Vagina (tissue), 2 donors: ENCODE measurements at regions of chr20 and their contacts with region 1.

Region 1: DNA sequence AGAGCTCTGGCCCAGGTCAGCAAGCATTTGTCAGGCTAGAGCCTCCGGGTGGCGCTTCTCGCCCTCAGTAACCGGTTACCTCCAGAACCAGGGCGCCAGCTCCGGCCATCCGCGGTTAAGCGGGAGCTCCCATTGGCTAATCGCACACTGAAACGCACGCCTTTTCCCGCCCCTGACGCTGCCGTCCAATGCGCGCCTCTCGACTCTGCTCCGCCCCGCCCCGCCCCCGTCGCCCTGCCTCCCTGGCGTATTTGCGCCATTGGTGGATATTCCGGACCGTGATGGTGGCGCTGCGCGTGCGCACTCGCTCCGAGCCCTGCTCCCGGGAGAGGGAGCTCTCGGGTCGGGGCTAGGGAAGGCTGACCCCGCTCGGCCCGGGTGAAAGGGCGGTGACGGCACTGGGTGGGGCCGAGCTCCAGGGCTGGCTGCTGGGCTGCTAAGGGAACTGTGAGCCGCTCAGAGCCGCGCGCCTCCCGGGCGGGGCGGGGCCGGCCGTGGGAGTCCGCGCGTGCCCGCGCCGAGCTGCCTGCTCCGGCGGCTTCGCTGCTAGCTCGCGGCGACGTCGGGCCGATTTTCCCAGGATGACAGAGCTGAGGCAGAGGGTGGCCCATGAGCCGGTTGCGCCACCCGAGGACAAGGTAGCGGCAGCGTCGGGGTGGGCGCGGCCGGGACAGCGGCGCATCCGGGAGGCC is at the start of gene CDS2:
- DNase-seq: peak; percentile 99 to 100
- H3K4me3 ChIP-seq: peak within 1 kb of the TSS; percentile 95 to 96
- H3K27ac ChIP-seq: peak within 1 kb of the TSS; percentile 98
- H3K4me1 ChIP-seq: peaks cover 36% of the 10 kb centered on the region
- H3K27me3 ChIP-seq: no peaks in the 10 kb centered on the region
- CTCF ChIP-seq: peak; percentile 23 to 69 (median 26)
- POLR2A ChIP-seq: peak in 1 of 2 donors; percentile 79
- total RNA-seq, gene CDS2: 24.8 TPM

Region 2: DNA sequence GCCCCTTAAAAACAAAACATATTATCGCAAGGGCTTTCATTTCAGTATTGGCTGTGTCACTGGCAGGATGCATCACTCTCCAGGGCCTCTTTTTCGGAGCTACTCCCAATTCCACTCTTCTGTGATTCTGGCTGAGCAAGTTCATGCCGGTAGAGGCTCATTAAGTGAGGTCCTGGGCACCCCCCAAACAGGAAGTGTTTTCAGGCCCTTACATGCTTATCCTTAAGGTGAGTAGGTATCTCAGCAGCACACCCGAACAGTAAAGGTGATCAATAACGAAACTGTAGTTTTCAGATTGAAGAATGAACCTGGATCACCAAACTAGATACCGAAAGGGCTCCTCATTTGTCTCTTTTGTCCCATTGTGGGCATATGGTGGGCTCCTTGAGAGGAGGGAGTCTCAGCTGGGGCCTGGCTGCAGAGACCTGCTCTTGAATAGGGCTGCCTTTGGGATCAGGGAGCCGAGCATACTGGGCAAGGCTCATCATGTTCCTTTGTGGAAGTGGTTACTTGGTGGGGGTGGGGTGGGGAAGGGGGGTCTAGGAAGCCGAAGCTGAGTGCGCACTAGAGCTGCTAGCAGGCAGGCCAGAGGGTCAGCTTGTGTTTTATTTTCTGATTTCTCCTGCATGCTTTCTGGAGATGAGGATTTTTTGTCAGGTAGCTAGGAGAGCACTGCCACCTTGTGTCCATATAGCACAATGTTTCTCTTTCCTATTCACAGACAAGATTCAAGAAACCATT is 65.3 kb after region 1 on chr20:
- intact Hi-C with region 1: loop called (anchors 2 kb)
- DNase-seq: no peak
- H3K4me3 ChIP-seq: no peak overlapping the region
- H3K27ac ChIP-seq: peak overlapping the region; percentile 74
- H3K4me1 ChIP-seq: peaks cover 9% of the 10 kb centered on the region
- H3K27me3 ChIP-seq: no peaks in the 10 kb centered on the region
- CTCF ChIP-seq: peak; percentile 64 to 76 (median 72)
- POLR2A ChIP-seq: no peak